ENCODE measurements at regions of chr5 and their contacts with region 1.

Region 1: DNA sequence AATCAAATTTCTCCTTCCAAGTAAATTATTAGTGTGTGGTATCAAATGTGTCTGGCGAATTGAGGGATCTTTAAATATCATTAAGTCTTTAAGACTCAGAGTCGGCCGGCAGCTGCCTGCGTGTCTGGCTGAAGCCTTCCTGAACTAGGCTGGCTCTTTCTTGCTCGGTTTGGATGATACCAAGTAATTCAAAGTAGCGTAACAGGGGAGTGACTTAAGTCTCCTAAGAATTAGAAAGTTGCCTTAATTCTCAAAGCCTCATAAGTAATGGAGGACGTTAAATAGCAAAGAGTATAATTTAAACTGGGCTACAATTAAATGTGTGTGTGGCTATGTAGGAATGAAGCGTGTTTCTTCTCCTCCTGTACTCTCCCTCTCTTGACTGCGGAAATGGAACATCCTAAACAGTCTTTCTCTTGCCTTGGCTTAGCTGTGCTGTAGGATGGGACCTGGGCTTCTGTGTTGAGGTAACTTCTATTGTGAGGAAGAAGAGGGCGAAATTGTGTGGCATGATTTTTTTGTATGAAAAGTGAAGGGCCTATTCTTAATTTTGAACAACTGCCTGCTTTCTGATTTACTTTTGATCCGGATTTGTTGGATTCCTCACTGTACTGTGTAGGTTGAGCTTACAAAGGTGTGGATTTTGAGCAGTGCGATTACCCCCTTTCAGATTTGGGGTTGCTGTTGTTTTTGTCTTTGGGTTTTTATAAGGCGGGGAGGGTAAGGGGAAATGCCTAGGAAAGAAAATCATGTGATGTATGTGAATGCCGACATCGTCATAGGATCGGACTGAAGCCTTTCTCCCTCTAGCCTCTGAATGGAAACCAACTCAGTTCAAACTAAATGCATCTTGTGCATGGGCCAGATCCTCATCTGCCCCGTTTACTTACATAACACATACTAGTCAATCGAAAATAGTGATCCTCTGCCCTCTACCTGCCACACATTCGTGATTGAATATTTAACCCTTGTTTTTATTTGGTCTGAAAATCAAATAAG is 29.9 kb downstream of the CPEB4 start:
- DNase-seq: peak; percentile 94
- H3K4me3 Mint-ChIP-seq: no peak overlapping the region
- H3K27ac Mint-ChIP-seq: no peak overlapping the region
- H3K4me1 Mint-ChIP-seq: peaks cover 8% of the 10 kb centered on the region
- H3K27me3 Mint-ChIP-seq: no peaks in the 10 kb centered on the region
- CTCF ChIP-seq: no peak

Region 2: DNA sequence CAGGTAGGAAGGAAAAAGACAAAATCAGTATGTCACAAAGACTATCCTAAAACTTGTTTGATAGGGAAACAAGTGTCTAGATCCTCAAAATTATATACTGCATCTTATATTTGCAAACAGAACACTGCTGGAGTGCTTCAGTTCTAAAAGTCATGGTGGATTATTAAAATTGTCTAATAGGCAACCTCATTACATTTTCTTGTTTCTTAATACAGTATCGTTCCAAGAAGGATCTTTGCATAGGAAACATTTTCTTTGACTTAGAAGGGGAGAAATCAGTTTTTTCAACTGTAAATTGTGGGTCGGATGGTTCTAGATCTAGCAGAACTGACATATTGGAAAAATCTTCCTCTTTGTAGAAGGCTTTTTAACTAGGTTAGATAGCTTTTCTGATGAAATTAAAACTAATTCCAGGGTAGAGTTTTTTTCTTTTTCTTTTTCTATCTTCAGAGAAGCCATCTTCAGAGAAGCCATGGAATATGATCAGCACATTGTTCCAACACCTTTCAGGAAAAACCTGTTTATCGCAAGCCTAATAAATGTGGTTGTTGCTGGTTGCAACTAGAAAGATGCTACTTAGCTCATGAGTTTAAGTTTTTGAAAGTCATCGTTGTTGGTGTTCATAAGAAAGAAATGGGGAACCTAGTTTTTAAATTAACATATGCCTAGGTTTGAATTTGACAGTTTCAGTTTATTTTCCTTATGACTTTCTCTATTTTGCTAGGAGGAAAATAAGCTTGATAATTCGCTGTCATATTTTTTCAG is 22.5 kb before region 1 on chr5:
- CTCF ChIA-PET with region 1: interaction called, 5 read pairs
- POLR2A ChIA-PET with region 1: interaction called, 149 read pairs
- intact Hi-C with region 1: loop called (anchors 2 kb)
- DNase-seq: no peak
- H3K4me3 Mint-ChIP-seq: peak overlapping the region; percentile 56
- H3K27ac Mint-ChIP-seq: peak overlapping the region; percentile 61
- H3K4me1 Mint-ChIP-seq: peaks cover 25% of the 10 kb centered on the region
- H3K27me3 Mint-ChIP-seq: no peaks in the 10 kb centered on the region
- CTCF ChIP-seq: no peak

Region 3: DNA sequence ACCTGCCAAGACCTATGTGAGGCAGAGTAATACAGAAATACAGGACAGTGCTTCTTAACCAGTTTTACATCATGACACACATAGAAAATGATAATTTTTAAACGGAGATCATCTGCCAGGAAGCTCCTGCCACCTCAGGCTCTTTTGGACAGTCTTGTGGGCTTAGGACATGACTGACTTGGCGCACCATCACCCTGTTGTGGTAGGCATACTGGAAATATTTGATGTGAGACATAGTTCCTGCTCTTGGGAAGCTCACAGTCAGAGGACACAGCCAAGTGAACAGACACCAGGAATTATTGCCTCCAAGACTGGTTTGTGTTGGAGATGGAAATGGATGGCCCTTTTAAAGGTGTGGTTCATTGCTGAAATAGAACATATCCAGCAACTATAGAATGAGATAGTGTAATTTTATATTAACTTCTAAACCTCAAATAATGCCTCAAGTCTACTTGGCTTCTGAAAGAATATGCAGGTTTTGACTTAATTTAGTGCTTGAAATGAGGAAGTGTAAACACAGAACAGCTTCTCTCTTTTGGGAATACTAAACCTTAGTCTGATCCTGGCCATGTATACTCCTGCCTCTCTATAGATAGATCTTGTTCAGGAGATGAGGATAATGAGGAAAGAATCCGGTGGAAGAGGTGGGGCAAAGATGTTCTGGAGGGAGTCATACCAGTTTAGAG is 10.3 kb before region 1 on chr5:
- CTCF ChIA-PET with region 1: interaction called, 4 read pairs
- POLR2A ChIA-PET with region 1: interaction called, 20 read pairs
- intact Hi-C with region 1: no loop called
- DNase-seq: no peak
- H3K4me3 Mint-ChIP-seq: no peak overlapping the region
- H3K27ac Mint-ChIP-seq: peak overlapping the region; percentile 11
- H3K4me1 Mint-ChIP-seq: peaks cover 28% of the 10 kb centered on the region
- H3K27me3 Mint-ChIP-seq: no peaks in the 10 kb centered on the region
- CTCF ChIP-seq: no peak

Measured in MCF 10A (cell line).